Activated CD4-positive, alpha-beta memory T cell treated with anti-CD3 and anti-CD28 coated beads for 36 hours (primary cell): ENCODE measurements at regions of chr13 and their contacts with region 1.

Region 1: DNA sequence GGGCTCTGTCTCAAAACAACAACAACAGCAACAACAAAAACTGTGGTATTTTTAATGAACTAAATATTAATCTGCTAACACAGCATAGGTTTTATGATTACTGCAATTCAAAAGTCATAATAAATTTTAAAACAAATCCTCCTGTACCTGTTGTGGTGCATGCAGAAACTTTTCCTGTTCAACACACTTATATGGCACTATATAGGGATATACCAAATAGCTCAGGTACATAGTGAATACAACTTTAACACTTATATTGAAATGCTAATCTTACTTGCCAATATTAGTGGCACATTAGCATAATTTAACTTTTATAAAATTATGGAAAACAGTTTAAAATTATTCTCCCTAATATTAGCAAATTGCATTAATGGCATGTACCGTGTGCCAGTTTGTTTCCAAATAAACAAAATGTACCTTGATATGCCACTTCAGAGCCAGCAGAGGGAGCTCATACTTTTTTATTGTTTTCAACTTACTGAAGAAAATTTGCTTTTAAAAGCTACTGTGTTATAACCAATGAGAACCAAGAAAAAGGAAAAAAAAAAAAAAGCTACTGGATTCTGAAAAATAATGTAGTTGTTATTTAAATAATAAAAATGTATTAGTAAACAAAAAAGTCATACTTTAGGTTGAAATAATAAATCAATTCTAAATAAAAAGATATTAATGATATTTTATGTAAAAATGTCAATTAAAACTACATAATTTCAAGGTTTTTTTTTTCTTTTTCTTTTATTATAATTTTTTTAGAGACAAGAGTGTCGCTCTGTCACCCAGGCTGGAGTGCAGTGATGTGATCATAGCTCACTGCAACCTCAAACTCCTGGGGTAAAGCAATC is 18.0 kb upstream of the RBM26 start:
- DNase-seq: no peak
- H3K4me3 Mint-ChIP-seq: no peak overlapping the region
- H3K27ac Mint-ChIP-seq: no peak overlapping the region
- H3K4me1 Mint-ChIP-seq: peaks cover 22% of the 10 kb centered on the region
- H3K27me3 Mint-ChIP-seq: no peaks in the 10 kb centered on the region

Region 2: GRCh38 chr13:79405829-79406596 is 18.0 kb before region 1 on chr13 and contains the start of gene RBM26:
- CTCF ChIA-PET with region 1: interaction called, 18 read pairs
- POLR2A ChIA-PET with region 1: interaction called, 3 read pairs
- intact Hi-C with region 1: no loop called
- DNase-seq: peak; percentile 96
- H3K4me3 Mint-ChIP-seq: peak within 1 kb of the TSS; percentile 88
- H3K27ac Mint-ChIP-seq: no peak within 1 kb of the TSS
- H3K4me1 Mint-ChIP-seq: peaks cover 38% of the 10 kb centered on the region
- H3K27me3 Mint-ChIP-seq: no peaks in the 10 kb centered on the region
- total RNA-seq, gene RBM26: 54.8 to 57.7 TPM

Region 3: DNA sequence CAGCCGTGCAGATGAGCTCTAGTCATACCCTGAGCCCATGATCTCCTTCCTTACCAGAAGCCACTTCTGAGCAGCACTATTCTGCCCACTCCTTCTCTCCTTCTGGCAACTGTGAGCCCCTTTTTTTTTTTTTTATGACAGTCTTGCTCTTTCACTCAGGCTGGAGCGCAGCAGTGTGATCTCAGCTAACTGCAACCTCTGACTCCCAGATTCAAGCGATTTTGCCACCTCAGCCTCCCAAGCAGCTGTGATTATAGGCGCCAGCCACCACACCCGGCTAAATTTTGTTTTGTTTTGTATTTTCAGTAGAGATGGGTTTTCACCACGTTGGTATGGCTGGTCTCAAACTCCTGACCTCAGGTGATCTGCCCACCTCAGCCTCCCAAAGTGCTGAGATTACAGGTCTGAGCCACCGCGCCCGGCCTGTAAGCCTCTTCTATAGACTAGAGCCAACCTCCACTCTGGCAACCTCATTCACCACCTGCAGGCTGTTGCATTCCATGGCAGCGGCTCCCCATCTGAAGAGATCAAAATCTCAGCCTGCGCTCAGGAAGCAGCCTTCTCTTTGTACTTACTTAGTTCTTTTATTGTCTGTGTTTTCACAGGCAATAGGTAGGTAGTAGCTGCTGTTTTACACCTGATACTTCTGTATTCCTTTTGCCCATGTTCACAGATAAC is 22.1 kb after region 1 on chr13:
- CTCF ChIA-PET with region 1: interaction called, 12 read pairs
- POLR2A ChIA-PET with region 1: no interaction called
- intact Hi-C with region 1: loop called (anchors 1 kb)
- DNase-seq: peak; percentile 39
- H3K4me3 Mint-ChIP-seq: no peak overlapping the region
- H3K27ac Mint-ChIP-seq: peak overlapping the region; percentile 40
- H3K4me1 Mint-ChIP-seq: peaks cover 56% of the 10 kb centered on the region
- H3K27me3 Mint-ChIP-seq: no peaks in the 10 kb centered on the region

Region 4: GRCh38 chr13:79501538-79502232 is 77.7 kb after region 1 on chr13:
- CTCF ChIA-PET with region 1: interaction called, 41 read pairs
- POLR2A ChIA-PET with region 1: no interaction called
- intact Hi-C with region 1: no loop called
- DNase-seq: no peak
- H3K4me3 Mint-ChIP-seq: no peak overlapping the region
- H3K27ac Mint-ChIP-seq: peak overlapping the region; percentile 74
- H3K4me1 Mint-ChIP-seq: peaks cover 83% of the 10 kb centered on the region
- H3K27me3 Mint-ChIP-seq: no peaks in the 10 kb centered on the region

Region 5: GRCh38 chr13:79533781-79534400 is 109.9 kb after region 1 on chr13:
- CTCF ChIA-PET with region 1: interaction called, 244 read pairs
- POLR2A ChIA-PET with region 1: no interaction called
- intact Hi-C with region 1: no loop called
- DNase-seq: no peak
- H3K4me3 Mint-ChIP-seq: no peak overlapping the region
- H3K27ac Mint-ChIP-seq: no peak overlapping the region
- H3K4me1 Mint-ChIP-seq: peaks cover 33% of the 10 kb centered on the region
- H3K27me3 Mint-ChIP-seq: no peaks in the 10 kb centered on the region

Region 6: GRCh38 chr13:80363890-80364503 is 940.0 kb after region 1 on chr13:
- CTCF ChIA-PET with region 1: interaction called, 4 read pairs
- POLR2A ChIA-PET with region 1: no interaction called
- intact Hi-C with region 1: loop called (anchors 10 kb)
- DNase-seq: no peak
- H3K4me3 Mint-ChIP-seq: no peak overlapping the region
- H3K27ac Mint-ChIP-seq: no peak overlapping the region
- H3K4me1 Mint-ChIP-seq: no peaks in the 10 kb centered on the region
- H3K27me3 Mint-ChIP-seq: peaks cover 1% of the 10 kb centered on the region